Activated naive CD4-positive, alpha-beta T cell treated with anti-CD3 and anti-CD28 coated beads for 36 hours (primary cell): ENCODE measurements at regions of chr6 and their contacts with region 1.

Region 1: GRCh38 chr6:31546962-31547726 is at the start of gene NFKBIL1:
- DNase-seq: peak; percentile 96
- H3K4me3 Mint-ChIP-seq: peak within 1 kb of the TSS; percentile 88
- H3K27ac Mint-ChIP-seq: peak within 1 kb of the TSS; percentile 94
- H3K4me1 Mint-ChIP-seq: peaks cover 43% of the 10 kb centered on the region
- H3K27me3 Mint-ChIP-seq: no peaks in the 10 kb centered on the region
- total RNA-seq, gene NFKBIL1: 20.4 to 20.6 TPM

Region 2: GRCh38 chr6:31345026-31345730 is 202.0 kb before region 1 on chr6:
- CTCF ChIA-PET with region 1: no interaction called
- intact Hi-C with region 1: no loop called
- DNase-seq: no peak
- H3K4me3 Mint-ChIP-seq: no peak overlapping the region
- H3K27ac Mint-ChIP-seq: no peak overlapping the region
- H3K4me1 Mint-ChIP-seq: peaks cover 9% of the 10 kb centered on the region
- H3K27me3 Mint-ChIP-seq: no peaks in the 10 kb centered on the region

Region 3: DNA sequence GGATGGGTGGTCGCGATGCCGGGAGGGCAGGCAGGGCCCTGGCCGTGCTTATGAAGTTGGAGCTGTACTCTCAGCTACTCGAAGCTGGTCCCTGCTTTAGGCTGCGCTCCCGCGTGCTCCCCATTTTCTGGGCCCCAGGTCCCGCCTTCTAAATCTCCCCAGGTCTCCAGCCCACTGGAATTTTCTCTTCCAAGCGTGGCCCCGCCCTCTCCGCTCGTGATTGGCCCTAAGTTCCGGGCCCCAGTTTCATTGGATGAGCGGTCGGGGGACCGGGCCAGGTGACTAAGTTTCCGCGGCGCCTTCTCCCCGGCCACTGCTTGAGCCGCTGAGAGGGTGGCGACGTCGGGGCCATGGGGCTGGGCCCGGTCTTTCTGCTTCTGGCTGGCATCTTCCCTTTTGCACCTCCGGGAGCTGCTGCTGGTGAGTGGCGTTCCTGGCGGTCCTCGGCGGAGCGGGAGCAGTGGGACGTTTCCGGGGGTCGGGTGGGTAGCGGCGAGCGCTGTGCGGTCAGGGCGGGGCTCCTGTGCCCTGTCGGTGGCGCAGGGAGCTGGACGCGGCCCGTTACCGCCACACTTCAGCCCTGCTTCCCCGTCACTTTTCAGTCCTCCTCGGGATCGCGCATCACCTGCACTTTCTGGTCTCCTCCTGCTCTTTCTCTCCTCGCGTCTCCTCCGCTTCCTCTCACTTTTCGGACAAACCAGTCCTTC is 143.7 kb before region 1 on chr6 and contains the start of gene MICA:
- CTCF ChIA-PET with region 1: no interaction called
- intact Hi-C with region 1: loop called (anchors 2 kb)
- DNase-seq: peak; percentile 77
- H3K4me3 Mint-ChIP-seq: peak within 1 kb of the TSS; percentile 92
- H3K27ac Mint-ChIP-seq: peak within 1 kb of the TSS; percentile 17
- H3K4me1 Mint-ChIP-seq: peaks cover 62% of the 10 kb centered on the region
- H3K27me3 Mint-ChIP-seq: no peaks in the 10 kb centered on the region
- total RNA-seq, gene MICA: 10.2 to 10.4 TPM

Region 4: DNA sequence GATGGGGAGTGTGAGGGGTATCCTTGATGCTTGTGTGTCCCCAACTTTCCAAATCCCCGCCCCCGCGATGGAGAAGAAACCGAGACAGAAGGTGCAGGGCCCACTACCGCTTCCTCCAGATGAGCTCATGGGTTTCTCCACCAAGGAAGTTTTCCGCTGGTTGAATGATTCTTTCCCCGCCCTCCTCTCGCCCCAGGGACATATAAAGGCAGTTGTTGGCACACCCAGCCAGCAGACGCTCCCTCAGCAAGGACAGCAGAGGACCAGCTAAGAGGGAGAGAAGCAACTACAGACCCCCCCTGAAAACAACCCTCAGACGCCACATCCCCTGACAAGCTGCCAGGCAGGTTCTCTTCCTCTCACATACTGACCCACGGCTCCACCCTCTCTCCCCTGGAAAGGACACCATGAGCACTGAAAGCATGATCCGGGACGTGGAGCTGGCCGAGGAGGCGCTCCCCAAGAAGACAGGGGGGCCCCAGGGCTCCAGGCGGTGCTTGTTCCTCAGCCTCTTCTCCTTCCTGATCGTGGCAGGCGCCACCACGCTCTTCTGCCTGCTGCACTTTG is 28.3 kb after region 1 on chr6 and contains the start of gene TNF:
- CTCF ChIA-PET with region 1: interaction called, 442 read pairs
- intact Hi-C with region 1: no loop called
- DNase-seq: peak; percentile 87
- H3K4me3 Mint-ChIP-seq: peak within 1 kb of the TSS; percentile 94
- H3K27ac Mint-ChIP-seq: peak within 1 kb of the TSS; percentile 97
- H3K4me1 Mint-ChIP-seq: peaks cover 65% of the 10 kb centered on the region
- H3K27me3 Mint-ChIP-seq: no peaks in the 10 kb centered on the region
- total RNA-seq, gene TNF: 31.6 to 33.2 TPM

Region 5: DNA sequence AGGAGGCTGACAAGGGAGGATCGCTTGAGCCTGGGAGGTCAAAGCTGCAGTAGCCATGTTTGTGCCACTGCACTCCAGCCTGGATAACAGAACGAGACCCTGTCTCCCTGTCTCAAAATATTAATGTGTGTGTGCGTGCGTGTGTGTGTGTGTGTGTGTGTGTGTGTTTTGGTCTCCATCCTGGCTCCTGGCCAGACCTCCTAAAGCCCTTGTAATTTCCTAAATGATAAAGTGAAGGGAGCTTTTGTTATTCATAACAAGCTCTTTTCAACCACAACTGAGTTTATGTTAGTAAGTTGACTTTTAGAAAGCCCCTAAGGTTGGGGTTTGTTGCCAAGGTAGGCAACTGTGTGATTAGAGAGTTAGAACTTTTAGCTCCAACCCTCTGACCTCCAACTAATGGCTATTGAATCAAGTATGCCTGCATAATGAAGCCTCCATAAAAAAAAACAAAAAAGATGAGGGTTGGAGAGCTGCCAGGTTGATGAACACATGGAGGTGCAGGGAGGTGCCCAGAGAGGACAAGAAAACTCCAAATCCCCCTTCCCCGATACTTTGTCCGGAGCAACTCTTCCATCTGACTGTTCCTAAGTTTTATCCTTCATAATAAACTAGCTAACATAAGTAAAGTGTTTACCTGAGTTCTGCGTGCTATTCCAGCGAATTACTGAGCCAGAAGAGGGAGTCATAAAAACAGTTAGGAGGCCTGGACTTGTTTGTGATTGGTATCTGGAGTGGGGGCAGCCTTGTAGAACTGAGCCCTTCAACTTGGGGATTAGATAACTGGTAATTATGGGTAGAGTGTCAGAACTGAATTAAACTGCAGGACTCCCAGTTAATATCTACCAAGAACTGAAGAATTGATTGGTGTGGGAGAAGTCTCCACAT is 62.6 kb after region 1 on chr6:
- CTCF ChIA-PET with region 1: interaction called, 10 read pairs
- intact Hi-C with region 1: no loop called
- DNase-seq: no peak
- H3K4me3 Mint-ChIP-seq: no peak overlapping the region
- H3K27ac Mint-ChIP-seq: no peak overlapping the region
- H3K4me1 Mint-ChIP-seq: peaks cover 5% of the 10 kb centered on the region
- H3K27me3 Mint-ChIP-seq: no peaks in the 10 kb centered on the region

Region 6: GRCh38 chr6:31665501-31666336 is 118.6 kb after region 1 on chr6 and contains the start of gene CSNK2B:
- CTCF ChIA-PET with region 1: interaction called, 3 read pairs
- intact Hi-C with region 1: loop called (anchors 1 kb)
- DNase-seq: peak; percentile 99
- H3K4me3 Mint-ChIP-seq: peak within 1 kb of the TSS; percentile 95
- H3K27ac Mint-ChIP-seq: peak within 1 kb of the TSS; percentile 97
- H3K4me1 Mint-ChIP-seq: peaks cover 62% of the 10 kb centered on the region
- H3K27me3 Mint-ChIP-seq: no peaks in the 10 kb centered on the region
- total RNA-seq, gene CSNK2B: 215 to 219 TPM

Region 7: DNA sequence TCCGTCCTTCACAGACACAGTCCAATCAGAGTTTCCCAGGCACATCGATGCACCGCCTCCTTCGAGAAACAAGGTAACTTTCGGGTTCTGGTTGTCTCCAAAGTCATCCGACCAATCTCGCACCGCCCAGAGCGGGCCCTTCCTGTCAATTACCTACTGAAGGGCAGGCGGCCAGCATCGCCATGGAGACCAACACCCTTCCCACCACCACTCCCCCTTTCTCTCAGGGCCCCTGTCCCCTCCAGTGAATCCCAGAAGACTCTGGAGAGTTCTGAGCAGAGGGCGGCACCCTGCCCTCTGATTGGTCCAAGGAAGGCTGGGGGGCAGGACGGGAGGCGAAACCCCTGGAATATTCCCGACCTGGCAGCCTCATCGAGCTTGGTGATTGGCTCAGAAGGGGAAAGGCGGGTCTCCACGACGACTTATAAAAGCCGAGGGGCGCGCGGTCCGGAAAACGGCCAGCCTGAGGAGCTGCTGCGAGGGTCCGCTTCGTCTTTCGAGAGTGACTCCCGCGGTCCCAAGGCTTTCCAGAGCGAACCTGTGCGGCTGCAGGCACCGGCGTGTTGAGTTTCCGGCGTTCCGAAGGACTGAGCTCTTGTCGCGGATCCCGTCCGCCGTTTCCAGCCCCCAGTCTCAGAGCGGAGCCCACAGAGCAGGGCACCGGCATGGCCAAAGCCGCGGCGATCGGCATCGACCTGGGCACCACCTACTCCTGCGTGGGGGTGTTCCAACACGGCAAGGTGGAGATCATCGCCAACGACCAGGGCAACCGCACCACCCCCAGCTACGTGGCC is 280.3 kb after region 1 on chr6 and contains the start of gene HSPA1B:
- CTCF ChIA-PET with region 1: no interaction called
- intact Hi-C with region 1: loop called (anchors 2 kb)
- DNase-seq: peak; percentile 98
- H3K4me3 Mint-ChIP-seq: peak within 1 kb of the TSS; percentile 85
- H3K27ac Mint-ChIP-seq: peak within 1 kb of the TSS; percentile 97
- H3K4me1 Mint-ChIP-seq: peaks cover 46% of the 10 kb centered on the region
- H3K27me3 Mint-ChIP-seq: no peaks in the 10 kb centered on the region
- total RNA-seq, gene HSPA1B: 47.8 to 50.1 TPM